ENCODE measurements at regions of chr4 and their contacts with region 1.

Region 1: GRCh38 chr4:38509551-38509950 is 154.4 kb upstream of the KLF3 start:
- DNase-seq: peak in 4 of 5 donors; percentile 22 to 80 (median 72)
- H3K4me3 ChIP-seq: peak overlapping the region; percentile 68
- H3K4me3 Mint-ChIP-seq: peak overlapping the region; percentile 70 to 93 (median 80)
- H3K27ac ChIP-seq: peak overlapping the region; percentile 35
- H3K27ac Mint-ChIP-seq: peak overlapping the region; percentile 59 to 95 (median 88)
- H3K4me1 ChIP-seq: peaks cover 75% of the 10 kb centered on the region
- H3K4me1 Mint-ChIP-seq: peaks cover 83 to 95% (median 90%) of the 10 kb centered on the region in 3 donors
- H3K27me3 ChIP-seq: no peaks in the 10 kb centered on the region
- H3K27me3 Mint-ChIP-seq: peaks cover 0 to 6% of the 10 kb centered on the region in 2 donors

Region 2: GRCh38 chr4:38366456-38366855 is 143.1 kb before region 1 on chr4:
- CTCF ChIA-PET with region 1: no interaction called
- POLR2A ChIA-PET with region 1: no interaction called
- DNase-seq: no peak
- H3K4me3 ChIP-seq: no peak overlapping the region
- H3K4me3 Mint-ChIP-seq: no peak overlapping the region
- H3K27ac ChIP-seq: no peak overlapping the region
- H3K27ac Mint-ChIP-seq: peak overlapping the region in 3 of 8 donors; percentile 10 to 61 (median 13)
- H3K4me1 ChIP-seq: peaks cover 14% of the 10 kb centered on the region
- H3K4me1 Mint-ChIP-seq: peaks cover 12 to 15% (median 12%) of the 10 kb centered on the region in 3 donors
- H3K27me3 ChIP-seq: no peaks in the 10 kb centered on the region
- H3K27me3 Mint-ChIP-seq: no peaks in the 10 kb centered on the region

Region 3: GRCh38 chr4:38529189-38530115 is 19.9 kb after region 1 on chr4:
- CTCF ChIA-PET with region 1: interaction called, 3 read pairs
- POLR2A ChIA-PET with region 1: interaction called, 16 read pairs
- DNase-seq: peak; percentile 13 to 73 (median 39)
- H3K4me3 ChIP-seq: peak overlapping the region; percentile 12
- H3K4me3 Mint-ChIP-seq: peak overlapping the region; percentile 3 to 71 (median 63)
- H3K27ac ChIP-seq: peak overlapping the region; percentile 74
- H3K27ac Mint-ChIP-seq: peak overlapping the region; percentile 51 to 99 (median 91)
- H3K4me1 ChIP-seq: peaks cover 25% of the 10 kb centered on the region
- H3K4me1 Mint-ChIP-seq: peaks cover 34 to 51% (median 38%) of the 10 kb centered on the region in 3 donors
- H3K27me3 ChIP-seq: no peaks in the 10 kb centered on the region
- H3K27me3 Mint-ChIP-seq: peaks cover 0 to 2% of the 10 kb centered on the region in 2 donors

Measured in CD8-positive, alpha-beta memory T cell (primary cell).